ENCODE measurements at regions of chr14 and their contacts with region 1.

Region 1: DNA sequence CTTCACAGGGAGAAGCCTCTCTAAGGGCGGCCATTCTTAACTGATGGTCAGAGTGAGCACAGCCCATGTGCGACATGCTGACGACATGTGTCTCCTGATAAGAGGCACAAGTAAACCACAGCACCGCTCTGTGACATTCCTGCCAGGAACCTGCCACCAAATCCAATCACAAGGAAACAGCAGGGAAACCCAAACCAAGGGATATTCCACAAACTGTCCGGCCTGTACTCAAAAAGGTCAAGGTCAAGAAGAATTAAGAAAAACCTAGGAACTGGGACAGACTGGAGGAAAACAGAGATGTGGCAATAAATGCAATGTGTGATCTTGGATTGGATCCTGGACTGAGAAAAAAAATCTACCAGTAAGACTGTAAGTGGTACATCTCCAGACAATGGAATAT is 91.9 kb downstream of the SYNE3 start:
- DNase-seq: no peak
- ATAC-seq: no peak
- H3K4me3 Mint-ChIP-seq: no peak overlapping the region
- H3K27ac Mint-ChIP-seq: no peak overlapping the region
- H3K4me1 Mint-ChIP-seq: no peaks in the 10 kb centered on the region
- H3K27me3 Mint-ChIP-seq: no peaks in the 10 kb centered on the region

Region 2: DNA sequence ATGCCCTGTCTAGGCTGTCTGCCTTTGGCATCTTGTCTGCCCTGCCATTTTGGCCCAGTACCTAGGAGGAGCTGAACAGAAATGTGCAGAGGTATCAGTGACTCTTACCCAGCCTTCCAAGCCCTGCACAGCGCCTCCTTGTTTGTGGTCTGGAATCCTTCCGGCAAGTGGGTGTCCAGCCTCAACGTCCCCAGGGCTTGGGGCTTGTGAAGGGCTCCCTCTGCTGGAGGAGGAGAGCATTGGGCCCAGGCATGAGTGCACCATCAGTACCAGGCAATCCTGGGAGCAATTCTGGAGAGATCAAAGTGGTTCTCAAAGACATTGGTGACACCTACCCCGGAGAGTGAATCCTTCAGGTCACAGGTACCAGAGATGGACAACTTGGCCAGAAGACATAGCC is 259.3 kb after region 1 on chr14:
- CTCF ChIA-PET with region 1: no interaction called
- POLR2A ChIA-PET with region 1: no interaction called
- intact Hi-C with region 1: loop called in 1 of 2 experiments (anchors 10 kb)
- DNase-seq: peak; percentile 52
- ATAC-seq: peak; percentile 53
- H3K4me3 Mint-ChIP-seq: no peak overlapping the region
- H3K27ac Mint-ChIP-seq: no peak overlapping the region
- H3K4me1 Mint-ChIP-seq: no peaks in the 10 kb centered on the region
- H3K27me3 Mint-ChIP-seq: peaks cover 20% of the 10 kb centered on the region